Right ventricle myocardium inferior (tissue), 1 donor: ENCODE measurements at regions of chrX and their contacts with region 1.

Region 1: GRCh38 chrX:117996918-117997480 is 119.6 kb downstream of the KLHL13 start:
- DNase-seq: no peak
- ATAC-seq: no peak

Region 2: DNA sequence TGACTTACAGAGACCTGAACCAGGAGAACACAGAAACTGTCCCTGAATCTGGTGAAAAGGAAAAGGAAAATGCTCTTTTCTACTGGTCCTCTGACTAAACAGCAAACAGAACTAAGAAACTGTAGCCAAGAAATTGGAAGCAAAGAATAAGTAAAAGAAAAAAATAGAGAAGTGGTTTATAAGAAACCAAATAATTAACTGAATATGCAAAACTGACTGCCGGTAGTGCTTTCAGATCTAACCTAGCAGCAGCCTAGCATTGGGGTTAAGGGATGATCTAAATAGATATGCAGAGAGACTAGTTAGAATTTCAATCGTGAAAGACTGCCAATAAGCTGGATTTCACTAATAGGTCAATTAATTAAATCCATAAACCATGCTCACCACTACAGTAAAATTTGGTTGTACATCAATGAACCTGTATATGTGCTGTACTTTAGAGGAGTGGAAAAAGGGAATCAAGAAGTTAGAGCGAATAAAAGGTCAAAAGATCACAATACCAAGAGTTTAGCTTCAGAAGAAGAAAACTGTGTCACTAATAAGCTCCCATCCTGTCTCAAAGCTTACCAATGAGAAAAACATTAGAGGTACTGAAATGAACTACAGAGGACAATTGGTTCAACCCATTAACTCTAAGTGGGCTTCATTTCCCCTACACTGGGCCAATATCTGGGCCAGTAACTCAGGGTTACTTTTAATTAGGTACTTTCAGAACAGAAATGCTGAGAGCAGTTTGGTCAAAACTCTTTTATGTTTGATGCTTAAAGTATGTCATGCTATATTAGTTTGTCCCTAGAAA is 66.0 kb after region 1 on chrX:
- intact Hi-C with region 1: no loop called
- DNase-seq: no peak
- ATAC-seq: no peak

Region 3: GRCh38 chrX:118116713-118117550 is 119.9 kb after region 1 on chrX and contains the start of gene KLHL13:
- intact Hi-C with region 1: loop called (anchors 10 kb)
- DNase-seq: no peak
- ATAC-seq: peak; percentile 91
- total RNA-seq, gene KLHL13: 6.0 TPM

Region 4: GRCh38 chrX:118226090-118226428 is 229.1 kb after region 1 on chrX:
- intact Hi-C with region 1: loop called (anchors 5 kb)
- DNase-seq: no peak
- ATAC-seq: no peak